H1 (cell line): ENCODE measurements at regions of chr17 and their contacts with region 1.

Region 1: DNA sequence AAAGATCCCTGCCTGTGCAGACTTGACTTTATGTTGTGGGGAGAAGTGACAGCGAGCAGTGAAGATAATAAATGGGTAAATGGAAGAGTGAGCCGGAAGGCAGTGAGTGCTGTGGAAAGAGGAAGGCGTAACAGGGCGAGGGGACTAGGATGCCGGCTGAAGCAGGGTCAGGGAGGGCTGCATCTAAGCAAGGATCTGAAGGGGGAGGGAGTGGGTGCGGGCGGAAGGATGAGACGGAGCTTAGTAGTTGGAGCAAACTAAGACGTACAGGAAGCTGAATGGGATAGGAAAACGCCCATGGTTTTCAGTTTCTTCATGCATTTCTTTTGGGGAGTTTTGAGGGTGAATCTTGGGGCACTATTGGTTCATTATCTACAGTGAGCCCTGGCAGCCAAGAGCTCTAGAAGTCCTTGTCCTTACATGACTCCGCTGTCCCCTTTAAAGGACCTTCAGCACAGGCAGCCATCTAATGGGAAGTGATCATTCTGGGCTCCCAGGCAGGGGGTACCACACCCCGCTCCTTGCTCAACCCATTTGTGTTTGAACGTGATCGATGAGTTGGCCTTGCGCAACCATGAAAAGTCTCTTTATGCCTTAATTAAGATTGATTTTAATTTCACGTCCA is 10.4 kb upstream of the NAT9 start:
- DNase-seq: no peak
- H3K4me3 ChIP-seq: no peak overlapping the region
- H3K27ac ChIP-seq: no peak overlapping the region
- H3K4me1 ChIP-seq: peaks cover 0 to 3% (median 3%) of the 10 kb centered on the region in 4 experiments; a peak in 5 of 7 replicates
- H3K27me3 ChIP-seq: no peaks in the 10 kb centered on the region
- CTCF ChIP-seq: no peak
- EP300 ChIP-seq: no peak
- POLR2A ChIP-seq: no peak
- RAD21 ChIP-seq: no peak

Region 2: DNA sequence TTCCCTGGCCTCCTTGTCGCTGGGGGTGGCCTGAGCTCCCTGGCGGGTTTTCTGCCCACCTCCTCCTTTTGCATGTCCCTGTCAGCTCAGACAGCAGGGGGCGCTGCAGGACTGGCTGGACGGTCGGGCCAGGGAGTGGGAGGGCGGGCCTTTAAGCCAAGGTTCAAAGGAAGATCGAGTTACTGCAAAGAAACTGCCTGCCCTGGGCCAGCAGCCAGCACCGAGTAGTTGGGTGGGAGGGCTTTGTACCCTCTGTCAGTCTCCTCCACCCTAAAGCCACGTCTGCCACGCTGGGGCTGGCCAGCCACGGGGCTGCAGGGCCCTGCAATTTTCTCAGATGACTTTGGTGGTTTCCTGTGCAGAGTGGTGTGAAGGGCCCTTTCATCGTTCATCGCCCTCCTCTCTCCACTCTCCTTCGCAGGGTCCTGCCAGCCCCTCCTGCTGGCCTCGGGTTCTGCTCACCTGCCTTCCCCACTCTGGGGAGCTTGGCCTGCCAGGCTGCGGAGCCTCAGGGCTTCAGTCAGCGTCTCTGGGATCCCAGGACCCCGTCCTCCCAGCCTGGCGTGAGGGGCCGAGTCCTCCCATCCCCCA is 407.0 kb before region 1 on chr17:
- CTCF ChIA-PET with region 1: no interaction called
- POLR2A ChIA-PET with region 1: no interaction called
- DNase-seq: peak; percentile 75 to 99
- H3K4me3 ChIP-seq: peak overlapping the region; percentile 1 to 54 (median 36); a peak in 6 of 8 replicates
- H3K27ac ChIP-seq: no peak overlapping the region
- H3K4me1 ChIP-seq: peaks cover 0 to 9% (median 6%) of the 10 kb centered on the region in 4 experiments; a peak in 6 of 7 replicates
- H3K27me3 ChIP-seq: 0 out of 7 replicates have a peak, but pooled peaks cover 0 to 1% (median 0%) of the 10 kb centered on the region in 4 experiments
- CTCF ChIP-seq: peak; percentile 86 to 96 (median 93)
- EP300 ChIP-seq: no peak
- POLR2A ChIP-seq: no peak
- RAD21 ChIP-seq: peak; percentile 98 to 99

Region 3: GRCh38 chr17:74759243-74759801 is 27.2 kb before region 1 on chr17:
- CTCF ChIA-PET with region 1: interaction called, 10 read pairs
- POLR2A ChIA-PET with region 1: no interaction called
- DNase-seq: no peak
- H3K4me3 ChIP-seq: peak overlapping the region in 1 of 4 experiments; percentile 36; a peak in 2 of 8 replicates
- H3K27ac ChIP-seq: peak overlapping the region; percentile 70; the same call in 1 of the 2 replicates
- H3K4me1 ChIP-seq: peaks cover 10 to 67% (median 51%) of the 10 kb centered on the region in 4 experiments
- H3K27me3 ChIP-seq: no peaks in the 10 kb centered on the region
- CTCF ChIP-seq: no peak
- EP300 ChIP-seq: no peak
- POLR2A ChIP-seq: no peak
- RAD21 ChIP-seq: no peak

Region 4: GRCh38 chr17:74801896-74802295 is 15.4 kb after region 1 on chr17:
- CTCF ChIA-PET with region 1: interaction called, 2,981 read pairs
- POLR2A ChIA-PET with region 1: no interaction called
- DNase-seq: no peak
- H3K4me3 ChIP-seq: no peak overlapping the region
- H3K27ac ChIP-seq: no peak overlapping the region
- H3K4me1 ChIP-seq: no peaks in the 10 kb centered on the region; a peak in 1 of 7 replicates
- H3K27me3 ChIP-seq: no peaks in the 10 kb centered on the region
- CTCF ChIP-seq: no peak
- EP300 ChIP-seq: no peak
- POLR2A ChIP-seq: no peak
- RAD21 ChIP-seq: no peak